Activated CD8-positive, alpha-beta T cell treated with anti-CD3 and anti-CD28 coated beads, Interleukin-2, amount 10 ng/mL, durations not matched to agents 7 days and 5 days (primary cell): ENCODE measurements at regions of chr12 and their contacts with region 1.

Region 1: DNA sequence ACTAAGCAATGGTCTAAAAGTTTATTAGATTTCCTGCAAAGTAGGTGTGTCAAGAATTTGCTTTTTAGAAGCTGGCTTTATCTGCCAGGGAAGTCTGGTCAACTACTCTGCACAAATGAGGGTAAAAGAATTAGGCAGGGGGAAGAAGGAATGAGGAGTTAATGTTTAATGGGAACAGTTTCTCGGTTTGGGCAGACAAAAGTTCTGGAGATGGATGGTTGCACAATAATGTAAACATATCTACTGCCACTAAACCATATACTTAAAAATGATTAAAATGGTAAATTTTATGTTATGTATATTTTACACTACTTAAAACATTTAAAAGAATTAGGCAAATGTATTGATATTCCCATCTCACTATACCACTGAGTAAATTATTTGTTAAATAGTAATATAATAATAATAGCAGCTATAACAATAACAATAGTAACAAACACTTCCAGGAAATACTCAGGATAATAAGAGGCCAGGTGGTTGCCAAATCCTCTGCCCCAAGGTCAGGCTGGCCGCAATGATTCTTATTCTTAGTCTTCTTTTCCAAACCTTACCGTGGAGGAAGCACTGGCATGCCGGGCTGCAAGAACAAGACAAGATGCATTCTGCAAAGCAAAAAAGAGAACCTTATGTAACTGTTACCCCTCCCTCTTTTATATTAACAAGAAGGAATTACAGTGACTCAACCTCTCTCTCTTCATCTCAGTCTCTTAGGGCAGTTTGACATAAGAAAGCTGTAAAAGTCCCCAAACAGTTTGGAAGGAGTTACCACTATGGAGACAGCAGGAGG is 13.9 kb downstream of the CS start:
- DNase-seq: no peak
- ATAC-seq: no peak
- H3K4me3 Mint-ChIP-seq: no peak overlapping the region
- H3K27ac Mint-ChIP-seq: no peak overlapping the region
- H3K4me1 Mint-ChIP-seq: peaks cover 20% of the 10 kb centered on the region
- H3K27me3 Mint-ChIP-seq: no peaks in the 10 kb centered on the region

Region 2: GRCh38 chr12:56266693-56267442 is 19.4 kb before region 1 on chr12 and contains the start of gene COQ10A:
- CTCF ChIA-PET with region 1: interaction called, 12 read pairs
- POLR2A ChIA-PET with region 1: interaction called, 4 read pairs
- DNase-seq: peak; percentile 93
- ATAC-seq: peak; percentile 92
- H3K4me3 Mint-ChIP-seq: peak within 1 kb of the TSS; percentile 93
- H3K27ac Mint-ChIP-seq: peak within 1 kb of the TSS; percentile 95
- H3K4me1 Mint-ChIP-seq: peaks cover 18% of the 10 kb centered on the region
- H3K27me3 Mint-ChIP-seq: no peaks in the 10 kb centered on the region
- total RNA-seq, gene COQ10A: 19.6 to 19.7 TPM